CD4-positive, alpha-beta memory T cell (primary cell): ENCODE measurements at regions of chr16 and their contacts with region 1.

Region 1: GRCh38 chr16:69396187-69397061 is 10.6 kb upstream of the TERF2 start:
- DNase-seq: peak; percentile 65 to 76 (median 68)
- H3K4me3 ChIP-seq: no peak overlapping the region
- H3K4me3 Mint-ChIP-seq: peak overlapping the region in 1 of 8 donors; percentile 27
- H3K27ac ChIP-seq: peak overlapping the region; percentile 31
- H3K27ac Mint-ChIP-seq: peak overlapping the region in 6 of 7 donors; percentile 6 to 81 (median 24)
- H3K4me1 ChIP-seq: peaks cover 4% of the 10 kb centered on the region
- H3K4me1 Mint-ChIP-seq: peaks cover 0 to 6% (median 5%) of the 10 kb centered on the region in 4 donors
- H3K27me3 ChIP-seq: no peaks in the 10 kb centered on the region
- H3K27me3 Mint-ChIP-seq: peaks cover 0 to 3% of the 10 kb centered on the region in 2 donors

Region 2: DNA sequence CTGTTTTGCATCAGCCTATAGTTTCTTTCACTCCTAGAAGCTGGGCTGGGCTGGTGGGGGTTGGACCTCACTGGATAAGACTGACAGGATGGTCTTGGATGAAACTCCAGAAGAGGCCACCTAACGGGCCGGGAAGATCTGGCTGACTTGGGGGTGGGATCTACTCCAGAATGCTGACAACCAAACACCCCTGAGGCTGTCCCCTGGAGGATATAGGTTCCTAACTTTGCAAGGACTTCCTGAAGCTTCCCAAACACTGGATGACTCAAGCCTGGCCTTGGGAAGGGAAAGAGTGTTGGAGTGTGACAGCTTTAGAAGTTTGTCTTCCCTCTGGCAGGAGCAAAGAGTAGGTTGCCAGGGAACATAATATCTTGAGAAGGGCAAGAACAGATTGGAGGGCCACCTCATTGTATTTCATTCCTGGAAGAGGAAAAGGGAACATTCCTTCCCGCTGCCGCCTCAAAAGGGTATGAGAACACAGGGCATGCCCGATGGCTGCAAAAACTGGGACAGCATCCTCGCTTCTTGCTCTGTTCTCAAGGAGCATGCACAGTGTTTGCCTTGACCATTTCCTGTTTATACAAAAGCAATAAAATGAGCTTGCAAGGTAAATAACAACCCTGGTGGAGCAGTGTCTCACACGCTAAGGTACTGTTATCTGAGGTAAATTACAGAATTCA is 21.2 kb after region 1 on chr16:
- CTCF ChIA-PET with region 1: interaction called, 10 read pairs
- POLR2A ChIA-PET with region 1: no interaction called
- intact Hi-C with region 1: no loop called
- DNase-seq: no peak
- H3K4me3 ChIP-seq: no peak overlapping the region
- H3K4me3 Mint-ChIP-seq: no peak overlapping the region
- H3K27ac ChIP-seq: no peak overlapping the region
- H3K27ac Mint-ChIP-seq: no peak overlapping the region
- H3K4me1 ChIP-seq: no peaks in the 10 kb centered on the region
- H3K4me1 Mint-ChIP-seq: peaks cover 0 to under 1% (median 0%) of the 10 kb centered on the region in 4 donors
- H3K27me3 ChIP-seq: no peaks in the 10 kb centered on the region
- H3K27me3 Mint-ChIP-seq: no peaks in the 10 kb centered on the region

Region 3: GRCh38 chr16:69443927-69444631 is 47.7 kb after region 1 on chr16:
- CTCF ChIA-PET with region 1: interaction called, 6 read pairs
- POLR2A ChIA-PET with region 1: no interaction called
- intact Hi-C with region 1: loop called (anchors 2 kb)
- DNase-seq: peak; percentile 31 to 66 (median 40)
- H3K4me3 ChIP-seq: peak overlapping the region; percentile 26 to 39
- H3K4me3 Mint-ChIP-seq: peak overlapping the region; percentile 83 to 91 (median 86)
- H3K27ac ChIP-seq: peak overlapping the region; percentile 70
- H3K27ac Mint-ChIP-seq: peak overlapping the region; percentile 94 to 99 (median 98)
- H3K4me1 ChIP-seq: peaks cover 26% of the 10 kb centered on the region
- H3K4me1 Mint-ChIP-seq: peaks cover 32 to 48% (median 41%) of the 10 kb centered on the region in 4 donors
- H3K27me3 ChIP-seq: no peaks in the 10 kb centered on the region
- H3K27me3 Mint-ChIP-seq: no peaks in the 10 kb centered on the region

Region 4: GRCh38 chr16:69474408-69474807 is 78.0 kb after region 1 on chr16:
- CTCF ChIA-PET with region 1: no interaction called
- POLR2A ChIA-PET with region 1: no interaction called
- intact Hi-C with region 1: no loop called
- DNase-seq: no peak
- H3K4me3 ChIP-seq: no peak overlapping the region
- H3K4me3 Mint-ChIP-seq: no peak overlapping the region
- H3K27ac ChIP-seq: no peak overlapping the region
- H3K27ac Mint-ChIP-seq: peak overlapping the region in 1 of 7 donors; percentile 50
- H3K4me1 ChIP-seq: peaks cover 18% of the 10 kb centered on the region
- H3K4me1 Mint-ChIP-seq: peaks cover 11 to 20% (median 15%) of the 10 kb centered on the region in 4 donors
- H3K27me3 ChIP-seq: no peaks in the 10 kb centered on the region
- H3K27me3 Mint-ChIP-seq: no peaks in the 10 kb centered on the region

Region 5: DNA sequence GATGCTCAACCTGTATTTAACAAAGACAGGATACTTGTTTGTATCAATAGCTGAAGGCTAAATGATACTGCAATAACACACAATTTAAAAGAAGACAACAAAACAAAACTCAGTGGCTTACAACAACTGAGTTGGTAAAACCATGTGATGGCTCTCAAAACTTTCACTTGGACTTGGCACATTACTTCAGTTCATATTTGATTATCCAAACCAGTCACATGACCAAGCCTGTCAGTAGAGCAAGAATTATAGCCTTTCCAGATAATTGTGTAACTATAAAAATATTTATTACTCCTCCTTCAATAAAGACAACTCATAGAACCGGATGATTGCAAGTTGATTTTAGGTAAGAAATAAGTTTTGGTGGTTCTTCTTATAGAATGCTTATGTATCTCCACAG is 273.2 kb after region 1 on chr16:
- CTCF ChIA-PET with region 1: interaction called, 10 read pairs
- POLR2A ChIA-PET with region 1: no interaction called
- intact Hi-C with region 1: no loop called
- DNase-seq: no peak
- H3K4me3 ChIP-seq: no peak overlapping the region
- H3K4me3 Mint-ChIP-seq: no peak overlapping the region
- H3K27ac ChIP-seq: no peak overlapping the region
- H3K27ac Mint-ChIP-seq: peak overlapping the region in 1 of 7 donors; percentile 8
- H3K4me1 ChIP-seq: no peaks in the 10 kb centered on the region
- H3K4me1 Mint-ChIP-seq: no peaks in the 10 kb centered on the region
- H3K27me3 ChIP-seq: no peaks in the 10 kb centered on the region
- H3K27me3 Mint-ChIP-seq: no peaks in the 10 kb centered on the region

Region 6: GRCh38 chr16:69754469-69755310 is 358.3 kb after region 1 on chr16 and contains the start of gene NOB1:
- CTCF ChIA-PET with region 1: interaction called, 35 read pairs
- POLR2A ChIA-PET with region 1: interaction called, 7 read pairs
- intact Hi-C with region 1: loop called (anchors 1 kb)
- DNase-seq: peak; percentile 96 to 98 (median 97)
- H3K4me3 ChIP-seq: peak within 1 kb of the TSS; percentile 83 to 100
- H3K4me3 Mint-ChIP-seq: peak within 1 kb of the TSS; percentile 100
- H3K27ac ChIP-seq: peak within 1 kb of the TSS; percentile 95
- H3K27ac Mint-ChIP-seq: peak within 1 kb of the TSS; percentile 96 to 100 (median 99)
- H3K4me1 ChIP-seq: peaks cover 17% of the 10 kb centered on the region
- H3K4me1 Mint-ChIP-seq: peaks cover 12 to 41% (median 26%) of the 10 kb centered on the region in 4 donors
- H3K27me3 ChIP-seq: no peaks in the 10 kb centered on the region
- H3K27me3 Mint-ChIP-seq: peaks cover 0 to 3% of the 10 kb centered on the region in 2 donors
- total RNA-seq, gene NOB1: 41.0 to 49.9 TPM